ENCODE measurements at regions of chr12 and their contacts with region 1.

Region 1: GRCh38 chr12:131621701-131622421 is 89.0 kb upstream of the SFSWAP start:
- DNase-seq: no peak
- ATAC-seq: 0 out of 2 replicates have a peak, but pooled peaks have one; percentile 18
- H3K4me3 ChIP-seq: no peak overlapping the region
- H3K27ac ChIP-seq: no peak overlapping the region
- H3K4me1 ChIP-seq: no peaks in the 10 kb centered on the region
- H3K27me3 ChIP-seq: peaks cover 59% of the 10 kb centered on the region
- CTCF ChIP-seq: no peak

Region 2: DNA sequence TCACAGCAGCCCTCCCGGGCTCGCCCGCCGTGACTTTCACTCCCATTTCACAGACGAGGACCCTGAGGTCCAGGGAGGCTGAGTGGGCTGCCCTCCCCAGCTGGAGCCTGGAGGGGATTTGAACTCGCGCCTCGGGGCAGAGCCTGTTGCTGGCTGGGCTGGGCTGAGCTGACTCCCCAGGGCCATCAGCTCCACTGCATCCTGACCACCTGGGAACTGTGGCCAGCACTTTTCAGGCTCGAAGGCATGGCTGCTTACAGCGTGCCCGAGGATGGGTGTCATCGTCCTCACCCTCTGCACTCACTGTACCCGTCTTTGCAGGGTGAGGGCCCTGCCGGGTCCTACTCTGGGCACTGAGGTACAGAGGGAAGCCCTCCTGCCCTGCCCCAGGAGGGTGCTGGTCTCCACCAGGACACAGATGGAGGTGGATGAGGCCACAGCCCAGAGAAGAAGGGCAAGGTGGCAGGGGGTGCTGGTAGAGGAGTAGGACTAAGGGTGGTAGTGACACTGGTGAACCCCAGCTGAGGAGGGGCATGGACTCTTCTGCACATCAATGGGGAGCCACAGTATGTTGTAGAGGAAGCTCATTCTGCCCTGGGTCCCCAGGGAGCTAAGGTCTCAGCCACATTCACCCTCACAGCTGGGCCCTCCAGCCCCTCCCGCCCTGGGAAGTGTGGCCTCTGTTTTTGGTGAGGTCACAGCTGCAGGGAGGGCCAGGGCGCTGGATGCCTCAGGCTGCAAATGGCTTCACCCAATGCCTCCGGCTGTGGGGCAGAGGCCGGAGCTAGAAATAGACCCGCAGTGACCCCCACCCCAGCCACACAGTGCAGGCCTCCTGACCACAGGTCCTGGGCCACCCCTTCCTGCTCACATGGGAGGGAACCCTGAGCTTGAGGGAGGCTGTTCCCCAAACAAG is 276.1 kb before region 1 on chr12:
- CTCF ChIA-PET with region 1: no interaction called
- POLR2A ChIA-PET with region 1: no interaction called
- intact Hi-C with region 1: loop called (anchors 5 kb)
- DNase-seq: no peak
- ATAC-seq: no peak
- H3K4me3 ChIP-seq: no peak overlapping the region
- H3K27ac ChIP-seq: no peak overlapping the region
- H3K4me1 ChIP-seq: no peaks in the 10 kb centered on the region
- H3K27me3 ChIP-seq: peaks cover 57% of the 10 kb centered on the region
- CTCF ChIP-seq: no peak

Region 3: DNA sequence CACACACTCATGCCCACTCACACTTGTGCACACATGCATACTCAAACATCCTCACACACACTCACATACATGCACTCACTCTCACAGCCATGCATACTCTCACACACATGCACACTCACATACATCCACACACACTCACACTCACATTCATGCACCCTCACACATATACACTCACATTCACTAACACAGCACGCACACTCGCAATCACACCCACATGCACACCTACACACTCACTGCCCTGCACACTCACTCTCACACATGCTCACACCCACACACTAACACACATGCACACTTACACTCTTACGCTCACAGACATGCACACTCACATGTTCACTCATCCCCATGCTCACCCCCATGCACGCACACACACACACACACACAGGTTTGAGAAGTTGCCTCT is 25.8 kb after region 1 on chr12:
- CTCF ChIA-PET with region 1: no interaction called
- POLR2A ChIA-PET with region 1: no interaction called
- intact Hi-C with region 1: no loop called
- DNase-seq: no peak
- ATAC-seq: no peak
- H3K4me3 ChIP-seq: no peak overlapping the region
- H3K27ac ChIP-seq: no peak overlapping the region
- H3K4me1 ChIP-seq: no peaks in the 10 kb centered on the region
- H3K27me3 ChIP-seq: peaks cover 42% of the 10 kb centered on the region
- CTCF ChIP-seq: no peak